ENCODE measurements at regions of chr1 and their contacts with region 1.

Region 1: GRCh38 chr1:111030590-111030989 is 66.9 kb upstream of the LRIF1 start:
- DNase-seq: peak; percentile 50
- CTCF ChIP-seq: peak; percentile 87

Region 2: GRCh38 chr1:110963691-110964399 is 66.7 kb before region 1 on chr1 and contains the start of gene LRIF1:
- CTCF ChIA-PET with region 1: interaction called, 16 read pairs
- POLR2A ChIA-PET with region 1: no interaction called
- DNase-seq: peak; percentile 98
- CTCF ChIP-seq: peak; percentile 15

Region 3: DNA sequence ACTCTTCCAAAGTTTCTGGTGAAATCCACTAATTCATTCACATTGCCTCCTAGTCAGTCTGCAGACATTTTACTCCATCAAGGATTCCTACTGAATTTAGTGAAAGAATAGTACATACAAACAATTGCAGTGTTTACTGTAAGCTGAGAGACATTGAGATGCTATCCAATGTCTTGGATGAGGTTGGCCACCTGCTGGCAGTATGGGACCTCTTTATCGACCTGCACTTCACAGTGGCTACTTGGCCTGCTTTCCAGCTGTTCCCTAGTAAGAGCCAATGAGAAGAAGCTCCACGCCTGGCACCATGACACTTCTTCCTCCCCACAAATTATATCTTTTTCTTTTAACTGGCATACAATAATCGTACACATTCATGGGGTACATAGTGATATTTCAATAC is 15.4 kb before region 1 on chr1:
- CTCF ChIA-PET with region 1: interaction called, 25 read pairs
- POLR2A ChIA-PET with region 1: no interaction called
- DNase-seq: no peak
- CTCF ChIP-seq: no peak

Region 4: DNA sequence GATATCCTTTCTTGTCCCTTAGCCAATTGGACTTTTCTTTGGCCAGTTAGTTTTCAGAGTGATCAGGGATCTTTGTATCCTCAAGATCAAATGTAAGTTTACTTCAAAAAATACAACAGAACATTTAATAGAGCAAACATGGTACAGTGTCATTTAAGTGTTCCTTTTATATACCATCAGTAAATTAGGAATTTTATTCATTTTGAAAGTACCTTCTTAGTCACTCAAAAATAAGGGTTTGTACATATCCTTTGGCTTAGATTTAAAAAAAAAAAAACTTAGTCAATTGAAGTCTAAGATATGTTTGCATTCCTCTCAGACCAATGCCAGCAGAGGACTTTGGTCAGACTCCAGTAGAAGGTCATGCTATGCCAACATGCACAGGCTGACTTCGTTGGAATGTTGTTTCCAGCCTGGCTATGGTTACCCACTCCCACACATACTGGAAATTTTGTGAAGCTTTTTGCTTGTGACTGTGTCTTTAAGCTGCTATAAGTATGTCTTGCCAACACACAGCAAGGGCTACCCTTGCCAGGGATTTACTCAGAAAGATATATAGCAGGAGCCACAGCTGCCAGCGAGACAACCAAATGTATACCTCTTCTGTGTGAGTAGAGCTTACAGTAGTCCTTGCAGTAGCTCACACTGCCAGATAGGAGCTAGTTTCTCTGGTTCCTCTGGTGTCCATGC is 14.6 kb after region 1 on chr1:
- CTCF ChIA-PET with region 1: interaction called, 30 read pairs
- POLR2A ChIA-PET with region 1: no interaction called
- DNase-seq: no peak
- CTCF ChIP-seq: no peak

Region 5: GRCh38 chr1:111334169-111334568 is 303.6 kb after region 1 on chr1:
- CTCF ChIA-PET with region 1: interaction called, 13 read pairs
- POLR2A ChIA-PET with region 1: no interaction called
- DNase-seq: peak; percentile 57
- CTCF ChIP-seq: peak; percentile 58

Region 6: GRCh38 chr1:111399792-111400610 is 369.4 kb after region 1 on chr1:
- CTCF ChIA-PET with region 1: interaction called, 20 read pairs
- POLR2A ChIA-PET with region 1: no interaction called
- DNase-seq: peak; percentile 41
- CTCF ChIP-seq: peak; percentile 66

Measured in GM10248 (cell line).